Panc1 (cell line): ENCODE measurements at regions of chr9 and their contacts with region 1.

Region 1: DNA sequence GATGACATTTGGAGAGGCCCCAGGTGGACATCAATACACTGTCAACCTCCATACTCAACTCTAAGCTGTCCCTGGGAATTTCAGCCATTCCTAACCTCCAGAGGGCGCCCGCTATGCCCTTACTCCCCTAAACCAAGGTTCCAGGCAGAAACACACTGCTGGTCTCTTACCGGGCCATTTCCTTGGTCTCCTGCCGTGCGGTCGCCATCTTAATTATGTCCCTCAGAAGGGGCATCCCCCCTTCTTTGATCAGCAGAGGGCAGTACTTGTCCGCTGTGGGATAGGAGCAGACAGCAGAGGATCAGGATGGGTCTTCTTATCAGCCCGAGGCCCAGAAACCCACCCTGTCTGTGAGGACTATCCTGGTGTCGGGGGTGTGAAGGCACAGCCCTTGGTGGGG is 9.3 kb upstream of the ZDHHC12 start:
- DNase-seq: peak; percentile 58
- ATAC-seq: peak; percentile 95
- H3K4me3 ChIP-seq: no peak overlapping the region
- H3K27ac ChIP-seq: 0 out of 2 replicates have a peak overlapping the region, but pooled peaks have one; percentile 51
- H3K4me1 ChIP-seq: no peaks in the 10 kb centered on the region
- H3K27me3 ChIP-seq: no peaks in the 10 kb centered on the region
- CTCF ChIP-seq: peak; percentile 88

Region 2: GRCh38 chr9:128408963-128409431 is 324.3 kb before region 1 on chr9:
- CTCF ChIA-PET with region 1: no interaction called
- POLR2A ChIA-PET with region 1: no interaction called
- in situ Hi-C with region 1: no loop called
- intact Hi-C with region 1: no loop called
- DNase-seq: no peak
- ATAC-seq: no peak
- H3K4me3 ChIP-seq: no peak overlapping the region
- H3K27ac ChIP-seq: no peak overlapping the region
- H3K4me1 ChIP-seq: peaks cover 9% of the 10 kb centered on the region; the same call in 1 of the 2 replicates
- H3K27me3 ChIP-seq: no peaks in the 10 kb centered on the region
- CTCF ChIP-seq: no peak

Region 3: DNA sequence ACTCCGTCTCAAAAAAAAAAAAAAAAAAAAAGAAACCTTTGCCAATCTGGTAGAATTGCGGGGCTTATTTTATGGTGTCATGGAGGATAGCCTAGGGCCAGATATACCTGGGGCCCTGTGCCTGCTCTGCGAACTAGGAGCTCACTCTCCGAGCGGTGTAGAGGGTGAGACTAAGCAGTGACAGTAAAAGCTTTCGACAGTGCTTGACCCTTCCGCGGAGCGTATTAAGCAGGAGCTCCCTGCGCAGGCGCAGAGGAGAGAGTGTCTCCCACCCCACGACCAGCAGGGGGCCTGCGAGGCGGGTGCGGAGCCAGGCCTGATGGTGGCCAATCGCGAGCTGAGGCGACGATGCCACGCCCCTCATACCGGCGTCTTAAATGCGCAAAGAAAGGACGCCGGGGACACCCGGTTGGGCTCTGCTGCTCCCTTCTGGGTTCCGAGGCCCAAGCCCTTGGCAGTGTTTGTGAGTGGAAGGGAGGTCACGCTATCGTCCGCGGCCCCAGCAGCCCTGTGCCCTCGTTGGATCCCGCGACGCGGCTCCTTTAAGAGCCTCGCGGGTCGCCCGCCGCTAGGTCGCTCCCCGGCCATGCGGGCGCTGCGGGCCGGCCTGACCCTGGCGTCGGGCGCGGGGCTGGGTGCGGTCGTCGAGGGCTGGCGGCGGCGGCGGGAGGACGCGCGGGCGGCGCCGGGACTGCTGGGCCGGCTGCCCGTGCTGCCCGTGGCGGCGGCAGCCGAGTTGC is 85.0 kb after region 1 on chr9 and contains the start of gene ENDOG:
- CTCF ChIA-PET with region 1: no interaction called
- POLR2A ChIA-PET with region 1: no interaction called
- in situ Hi-C with region 1: no loop called
- intact Hi-C with region 1: loop called (anchors 10 kb)
- DNase-seq: peak; percentile 87
- ATAC-seq: peak; percentile 89
- H3K4me3 ChIP-seq: peak within 1 kb of the TSS; percentile 53 to 56
- H3K27ac ChIP-seq: peak within 1 kb of the TSS; percentile 72
- H3K4me1 ChIP-seq: peaks cover 3% of the 10 kb centered on the region; the same call in 1 of the 2 replicates
- H3K27me3 ChIP-seq: no peaks in the 10 kb centered on the region
- CTCF ChIP-seq: peak; percentile 89
- total RNA-seq, gene ENDOG: 39.9 TPM